ENCODE measurements at regions of chr11 and their contacts with region 1.

Region 1: GRCh38 chr11:62556108-62556871 is 9.7 kb upstream of the AHNAK start:
- DNase-seq: peak; percentile 87
- ATAC-seq: peak; percentile 79
- H3K4me3 Mint-ChIP-seq: peak overlapping the region; percentile 79
- H3K27ac Mint-ChIP-seq: peak overlapping the region; percentile 97
- H3K4me1 Mint-ChIP-seq: peaks cover 82% of the 10 kb centered on the region
- H3K27me3 Mint-ChIP-seq: no peaks in the 10 kb centered on the region

Region 2: DNA sequence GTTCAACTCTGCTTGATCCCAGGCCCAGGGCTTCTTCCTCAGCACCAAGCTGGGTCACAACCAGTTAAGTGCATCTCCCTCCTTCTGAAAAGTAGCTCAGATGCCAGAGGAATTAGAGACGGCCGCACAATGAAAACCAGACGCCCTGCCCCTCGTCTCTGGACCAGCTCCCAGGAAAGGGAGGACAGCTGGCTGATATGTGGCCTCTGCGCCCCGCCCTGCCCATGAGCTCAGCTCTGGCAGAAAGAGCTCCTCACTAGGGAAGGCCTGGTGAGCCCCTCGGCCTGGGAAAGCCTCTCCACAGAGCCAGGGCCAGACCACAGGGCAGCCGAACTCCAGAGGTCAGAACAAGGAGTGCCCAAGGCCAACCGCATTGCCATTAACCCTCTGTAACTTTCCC is 155.5 kb before region 1 on chr11:
- POLR2A ChIA-PET with region 1: interaction called, 19 read pairs
- DNase-seq: no peak
- ATAC-seq: no peak
- H3K4me3 Mint-ChIP-seq: no peak overlapping the region
- H3K27ac Mint-ChIP-seq: no peak overlapping the region
- H3K4me1 Mint-ChIP-seq: peaks cover 27% of the 10 kb centered on the region
- H3K27me3 Mint-ChIP-seq: no peaks in the 10 kb centered on the region

Region 3: DNA sequence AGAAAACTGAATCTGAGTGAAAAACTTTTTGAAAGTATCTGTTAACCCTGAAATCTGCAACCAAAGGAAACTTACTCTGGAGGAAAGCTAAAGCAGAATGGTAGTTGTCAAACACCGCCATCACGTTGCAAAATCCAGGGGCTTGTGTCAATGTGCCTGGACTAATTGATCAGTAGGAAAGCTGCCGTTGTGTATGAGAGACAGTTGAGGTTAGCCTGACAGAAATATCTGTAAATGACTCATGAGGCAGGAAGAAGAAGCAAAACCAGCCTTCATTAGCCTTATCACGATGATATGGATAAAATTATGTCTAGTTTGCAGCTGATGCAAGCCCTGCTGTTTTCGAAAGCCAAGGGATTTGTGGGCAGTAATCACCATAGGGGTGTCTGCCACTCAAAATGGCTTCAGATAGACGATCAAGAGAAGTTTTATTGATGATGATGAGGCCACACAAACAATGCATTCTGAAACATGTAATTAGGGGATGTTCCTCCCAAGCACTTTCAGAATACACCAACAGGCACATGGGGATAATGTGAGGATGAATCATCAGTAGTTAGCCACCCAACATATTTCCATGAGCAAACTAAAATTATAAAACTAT is 128.6 kb before region 1 on chr11:
- POLR2A ChIA-PET with region 1: interaction called, 21 read pairs
- DNase-seq: no peak
- ATAC-seq: peak; percentile 28
- H3K4me3 Mint-ChIP-seq: peak overlapping the region; percentile 29
- H3K27ac Mint-ChIP-seq: peak overlapping the region; percentile 90
- H3K4me1 Mint-ChIP-seq: peaks cover 38% of the 10 kb centered on the region
- H3K27me3 Mint-ChIP-seq: peaks cover 11% of the 10 kb centered on the region

Region 4: GRCh38 chr11:62487738-62488551 is 68.3 kb before region 1 on chr11:
- POLR2A ChIA-PET with region 1: no interaction called
- DNase-seq: no peak
- ATAC-seq: no peak
- H3K4me3 Mint-ChIP-seq: no peak overlapping the region
- H3K27ac Mint-ChIP-seq: no peak overlapping the region
- H3K4me1 Mint-ChIP-seq: peaks cover 3% of the 10 kb centered on the region
- H3K27me3 Mint-ChIP-seq: peaks cover 14% of the 10 kb centered on the region

Region 5: DNA sequence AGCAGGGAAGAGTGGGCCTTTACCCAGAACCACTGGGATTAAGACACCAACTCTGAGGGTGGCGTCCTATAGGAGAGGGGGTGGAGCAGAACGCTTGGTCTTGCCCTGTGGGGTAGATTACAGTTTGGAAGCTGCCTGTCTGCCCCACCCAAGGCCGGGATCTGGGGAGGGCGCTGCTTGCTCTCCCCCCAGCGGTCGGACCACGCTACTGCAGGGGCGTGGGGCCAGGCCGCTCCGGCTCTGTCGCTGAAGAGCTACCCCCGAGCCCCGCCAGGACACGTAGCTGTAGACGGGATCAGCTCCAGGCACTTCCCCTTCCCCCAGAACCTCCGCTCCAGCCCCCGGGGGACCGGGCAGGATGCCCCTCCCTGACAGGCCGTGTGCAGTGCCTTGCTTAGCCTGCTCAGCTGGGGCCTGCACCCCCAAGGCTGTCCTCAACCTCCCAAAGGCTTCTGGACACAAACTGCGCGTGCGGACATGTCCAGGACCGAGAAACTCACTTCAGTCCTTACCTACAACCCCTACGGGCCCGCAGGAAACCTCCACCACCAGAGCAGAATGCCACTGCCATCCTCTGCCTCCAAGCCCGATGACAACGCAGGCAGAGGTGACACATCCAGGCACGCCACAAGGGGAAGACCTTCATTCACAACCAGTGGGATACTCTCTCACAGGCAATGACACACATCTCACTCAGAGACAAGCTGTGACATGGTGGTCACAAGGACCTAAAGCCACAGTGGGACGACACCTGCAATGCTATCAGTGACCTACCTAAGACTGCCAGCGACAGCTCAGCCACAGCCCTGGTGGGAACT is 13.3 kb before region 1 on chr11:
- POLR2A ChIA-PET with region 1: interaction called, 97 read pairs
- DNase-seq: peak; percentile 88
- ATAC-seq: peak; percentile 43
- H3K4me3 Mint-ChIP-seq: peak overlapping the region; percentile 73
- H3K27ac Mint-ChIP-seq: peak overlapping the region; percentile 83
- H3K4me1 Mint-ChIP-seq: peaks cover 52% of the 10 kb centered on the region
- H3K27me3 Mint-ChIP-seq: peaks cover 9% of the 10 kb centered on the region

Region 6: GRCh38 chr11:62573592-62574362 is 17.5 kb after region 1 on chr11 and contains the start of gene EEF1G:
- POLR2A ChIA-PET with region 1: interaction called, 25 read pairs
- DNase-seq: peak; percentile 94
- ATAC-seq: peak; percentile 95
- H3K4me3 Mint-ChIP-seq: peak within 1 kb of the TSS; percentile 99
- H3K27ac Mint-ChIP-seq: peak within 1 kb of the TSS; percentile 95
- H3K4me1 Mint-ChIP-seq: peaks cover 41% of the 10 kb centered on the region
- H3K27me3 Mint-ChIP-seq: no peaks in the 10 kb centered on the region
- total RNA-seq, gene EEF1G: 1,132 to 1,152 TPM